ENCODE measurements at regions of chr5 and their contacts with region 1.

Region 1: GRCh38 chr5:57499262-57500050 is 16.8 kb upstream of the ACTBL2 start:
- DNase-seq: peak; percentile 50 to 84
- H3K4me3 ChIP-seq: peak overlapping the region; percentile 18; the same call in 1 of the 2 replicates
- H3K27ac ChIP-seq: peak overlapping the region; percentile 74
- H3K4me1 ChIP-seq: peaks cover 34% of the 10 kb centered on the region
- H3K27me3 ChIP-seq: no peaks in the 10 kb centered on the region
- CTCF ChIP-seq: peak; percentile 84

Region 2: DNA sequence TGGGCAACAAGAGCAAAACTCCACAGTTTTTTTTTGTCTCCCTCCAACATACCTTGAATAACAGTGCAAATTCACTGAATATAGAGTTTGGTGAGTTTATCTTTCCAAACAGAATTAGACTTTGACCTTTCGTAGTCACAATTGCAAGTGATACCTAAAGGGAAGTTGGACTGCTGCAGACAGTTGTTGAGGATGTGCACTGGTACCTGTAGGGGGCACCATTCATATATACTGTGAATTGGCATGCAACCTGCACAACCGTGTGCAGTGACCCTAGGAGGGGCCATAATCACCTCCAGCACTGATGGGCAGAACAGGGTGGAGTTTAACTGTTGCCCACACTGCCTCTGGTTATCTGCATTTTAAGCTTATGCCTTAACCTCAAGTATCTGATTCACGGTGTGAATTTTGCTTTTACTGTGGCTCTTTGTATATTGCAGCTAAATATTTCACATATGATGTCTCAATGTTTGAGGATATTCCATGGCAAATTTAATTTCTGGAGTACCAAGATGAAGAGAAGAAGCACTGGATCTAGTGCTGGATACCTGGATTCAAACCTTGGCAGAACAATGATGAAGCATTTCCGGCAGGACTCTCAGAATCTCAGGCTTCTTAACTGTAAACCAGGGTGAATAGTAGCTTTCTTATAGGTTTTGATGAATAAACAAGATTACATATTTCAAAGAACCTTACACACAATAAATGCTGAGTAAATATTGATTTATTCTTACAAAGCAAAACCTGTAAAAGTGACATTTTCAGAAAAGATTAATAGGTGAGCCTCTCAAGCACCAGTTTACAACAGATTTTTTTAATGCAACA is 161.2 kb before region 1 on chr5:
- CTCF ChIA-PET with region 1: no interaction called
- POLR2A ChIA-PET with region 1: no interaction called
- intact Hi-C with region 1: loop called (anchors 10 kb)
- DNase-seq: peak; percentile 31 to 72
- H3K4me3 ChIP-seq: no peak overlapping the region
- H3K27ac ChIP-seq: peak overlapping the region; percentile 67
- H3K4me1 ChIP-seq: peaks cover 37% of the 10 kb centered on the region
- H3K27me3 ChIP-seq: no peaks in the 10 kb centered on the region
- CTCF ChIP-seq: peak; percentile 50

Region 3: DNA sequence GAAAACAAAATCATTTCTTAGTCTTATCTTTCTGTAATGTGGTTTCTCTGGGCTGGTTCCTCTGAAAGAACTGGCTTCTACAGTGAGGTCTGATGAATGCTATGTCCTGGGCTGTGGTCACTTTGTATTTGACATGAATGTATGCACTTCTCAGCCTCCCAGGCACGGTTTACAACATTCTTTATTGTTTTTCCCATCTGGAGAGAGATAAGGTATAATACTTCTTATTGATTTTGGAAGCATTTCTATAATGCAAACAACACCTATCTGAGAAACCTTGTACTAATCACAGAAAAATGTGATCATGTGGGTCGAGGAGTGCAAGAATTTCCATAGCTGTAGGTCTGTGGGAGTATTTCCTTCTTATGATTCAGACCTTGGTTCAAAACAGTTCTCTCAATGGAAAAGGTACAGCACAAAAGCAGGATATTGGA is 63.7 kb before region 1 on chr5:
- CTCF ChIA-PET with region 1: no interaction called
- POLR2A ChIA-PET with region 1: interaction called, 13 read pairs
- intact Hi-C with region 1: loop called (anchors 1 kb)
- DNase-seq: peak; percentile 58 to 99
- H3K4me3 ChIP-seq: no peak overlapping the region
- H3K27ac ChIP-seq: peak overlapping the region; percentile 99
- H3K4me1 ChIP-seq: peaks cover 42% of the 10 kb centered on the region
- H3K27me3 ChIP-seq: no peaks in the 10 kb centered on the region
- CTCF ChIP-seq: no peak

Region 4: DNA sequence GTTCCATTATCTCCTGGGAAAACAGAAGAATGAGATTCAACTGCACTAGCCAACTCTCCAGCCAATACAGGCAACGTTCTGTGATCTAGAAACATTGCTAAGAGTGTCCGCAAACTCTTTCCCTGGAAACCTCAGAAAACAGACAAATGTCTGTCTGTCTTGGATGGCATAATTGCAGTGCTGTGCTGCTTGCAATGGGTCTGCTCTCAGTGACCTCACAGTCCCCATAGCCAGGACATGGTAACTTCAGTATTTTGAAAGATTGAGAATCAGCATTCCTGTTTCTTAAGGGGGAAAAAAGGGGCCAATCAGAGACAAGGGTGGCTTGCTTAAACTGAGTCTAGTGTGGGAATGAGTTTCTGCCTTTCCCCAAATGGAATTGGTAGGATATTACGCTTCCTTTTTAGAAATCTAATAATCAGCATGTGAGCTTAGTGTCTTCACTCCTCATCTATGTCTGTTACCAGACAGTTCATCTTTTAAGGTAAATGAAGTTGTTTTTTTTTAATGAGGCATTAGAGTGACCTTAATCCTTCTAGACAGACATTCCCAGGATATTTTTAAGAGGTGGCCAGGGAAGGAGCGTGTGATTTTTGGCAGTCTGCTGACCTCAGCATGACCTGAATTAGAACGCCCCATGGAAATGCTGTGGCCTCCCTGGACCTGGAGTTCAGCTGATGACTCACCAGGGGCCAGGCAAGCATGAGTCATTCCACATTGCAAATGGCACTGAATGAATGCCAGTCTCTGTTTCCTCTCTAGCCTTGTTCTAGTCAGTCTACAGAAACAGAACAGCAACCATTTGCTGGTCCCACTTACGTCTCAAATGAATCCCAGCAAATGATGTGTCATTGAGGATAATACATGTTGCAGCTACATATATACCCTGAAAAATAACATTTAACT is 193.4 kb after region 1 on chr5:
- CTCF ChIA-PET with region 1: interaction called, 6 read pairs
- POLR2A ChIA-PET with region 1: interaction called, 3 read pairs
- intact Hi-C with region 1: loop called (anchors 5 kb)
- DNase-seq: peak; percentile 83 to 86
- H3K4me3 ChIP-seq: no peak overlapping the region; the same call in 1 of the 2 replicates
- H3K27ac ChIP-seq: peak overlapping the region; percentile 91
- H3K4me1 ChIP-seq: peaks cover 25% of the 10 kb centered on the region
- H3K27me3 ChIP-seq: no peaks in the 10 kb centered on the region
- CTCF ChIP-seq: no peak

Region 5: GRCh38 chr5:57754616-57755015 is 255.2 kb after region 1 on chr5:
- CTCF ChIA-PET with region 1: no interaction called
- POLR2A ChIA-PET with region 1: no interaction called
- intact Hi-C with region 1: no loop called
- DNase-seq: no peak
- H3K4me3 ChIP-seq: no peak overlapping the region
- H3K27ac ChIP-seq: no peak overlapping the region
- H3K4me1 ChIP-seq: no peaks in the 10 kb centered on the region
- H3K27me3 ChIP-seq: no peaks in the 10 kb centered on the region
- CTCF ChIP-seq: no peak

Region 6: DNA sequence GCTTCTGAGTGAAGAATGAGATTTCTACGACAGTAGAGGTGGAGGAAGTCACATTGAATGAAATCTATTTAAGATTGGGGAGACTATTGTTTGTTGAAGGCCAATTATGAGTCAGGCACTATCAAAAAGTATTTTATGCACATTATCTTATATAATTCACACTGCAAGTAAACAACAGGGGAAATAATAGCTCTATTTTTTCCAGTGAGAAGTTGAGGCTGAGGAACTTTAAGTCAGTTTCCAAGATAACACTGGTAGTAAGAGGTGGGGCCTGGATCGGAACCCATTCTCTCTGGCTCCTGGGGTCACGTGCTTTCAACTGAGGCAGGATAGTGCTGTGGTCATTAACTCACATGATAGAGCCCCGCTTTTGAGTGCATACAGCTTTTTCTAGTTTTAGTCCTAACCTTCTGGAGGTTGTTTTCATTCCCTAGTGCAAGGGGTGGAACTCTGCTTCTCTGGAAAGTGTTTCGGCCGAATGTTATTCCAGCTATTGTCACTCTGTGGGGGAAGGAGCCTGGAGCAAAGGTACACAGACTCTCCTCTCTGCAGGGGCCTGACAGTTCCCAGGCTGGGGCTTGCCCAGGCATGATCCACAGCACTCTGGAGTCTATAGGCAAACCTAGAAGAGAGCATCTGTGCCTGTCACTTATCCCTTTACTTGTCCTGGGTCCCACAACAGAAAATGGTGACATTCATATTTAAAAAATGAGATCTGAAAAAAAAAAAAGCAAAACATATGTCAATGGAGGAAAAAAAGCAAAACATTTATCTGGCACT is 335.6 kb after region 1 on chr5:
- CTCF ChIA-PET with region 1: no interaction called
- POLR2A ChIA-PET with region 1: interaction called, 3 read pairs
- intact Hi-C with region 1: loop called (anchors 5 kb)
- DNase-seq: no peak
- H3K4me3 ChIP-seq: no peak overlapping the region
- H3K27ac ChIP-seq: no peak overlapping the region
- H3K4me1 ChIP-seq: peaks cover 30% of the 10 kb centered on the region
- H3K27me3 ChIP-seq: no peaks in the 10 kb centered on the region
- CTCF ChIP-seq: no peak

Region 7: DNA sequence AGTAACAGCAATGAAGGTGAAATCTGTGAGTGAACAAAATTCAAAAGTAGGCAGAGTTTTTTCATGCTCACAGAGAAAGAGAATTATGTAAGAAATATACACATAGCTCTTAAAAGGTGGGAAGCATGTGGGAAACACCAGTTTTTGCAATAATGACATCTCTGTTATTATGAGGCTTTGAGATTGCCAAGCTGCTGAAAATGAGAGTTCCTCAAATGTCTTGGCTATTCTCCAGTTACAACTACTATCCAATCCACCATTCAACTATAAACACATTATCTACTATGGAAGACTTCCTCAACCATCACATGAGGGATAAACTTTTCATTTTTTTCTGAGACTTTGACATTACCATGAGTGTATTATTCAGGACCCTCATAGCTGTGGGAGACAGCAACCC is 404.0 kb after region 1 on chr5:
- CTCF ChIA-PET with region 1: no interaction called
- POLR2A ChIA-PET with region 1: no interaction called
- intact Hi-C with region 1: no loop called
- DNase-seq: no peak
- H3K4me3 ChIP-seq: no peak overlapping the region
- H3K27ac ChIP-seq: no peak overlapping the region
- H3K4me1 ChIP-seq: 0 out of 2 replicates have a peak, but pooled peaks cover 6% of the 10 kb centered on the region
- H3K27me3 ChIP-seq: no peaks in the 10 kb centered on the region
- CTCF ChIP-seq: no peak

Measured in PC-9 (cell line).